GM10248 (cell line): ENCODE measurements at regions of chr12 and their contacts with region 1.

Region 1: DNA sequence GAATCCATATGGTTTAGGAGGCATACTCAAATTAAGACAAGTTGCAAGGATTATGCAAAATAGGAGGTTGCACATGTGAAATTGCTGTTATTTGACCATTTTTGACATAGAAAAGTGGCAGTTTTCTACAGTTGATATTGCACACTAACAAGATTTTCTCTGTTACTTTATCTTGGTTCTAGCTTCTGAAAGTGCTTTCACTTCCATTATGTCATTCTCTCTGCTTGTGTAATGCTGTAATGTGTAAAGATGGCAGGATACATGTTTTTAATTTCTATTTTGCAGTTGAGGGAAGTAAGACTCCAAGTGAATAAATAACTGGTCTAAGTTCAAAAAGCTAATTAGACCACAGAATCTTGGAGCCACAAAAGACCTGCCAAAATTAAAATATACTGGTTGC is 60.6 kb downstream of the MYRFL start:
- DNase-seq: peak; percentile 26
- CTCF ChIP-seq: no peak

Region 2: GRCh38 chr12:69873429-69873828 is 12.2 kb before region 1 on chr12:
- CTCF ChIA-PET with region 1: interaction called, 27 read pairs
- POLR2A ChIA-PET with region 1: no interaction called
- DNase-seq: no peak
- CTCF ChIP-seq: no peak

Region 3: DNA sequence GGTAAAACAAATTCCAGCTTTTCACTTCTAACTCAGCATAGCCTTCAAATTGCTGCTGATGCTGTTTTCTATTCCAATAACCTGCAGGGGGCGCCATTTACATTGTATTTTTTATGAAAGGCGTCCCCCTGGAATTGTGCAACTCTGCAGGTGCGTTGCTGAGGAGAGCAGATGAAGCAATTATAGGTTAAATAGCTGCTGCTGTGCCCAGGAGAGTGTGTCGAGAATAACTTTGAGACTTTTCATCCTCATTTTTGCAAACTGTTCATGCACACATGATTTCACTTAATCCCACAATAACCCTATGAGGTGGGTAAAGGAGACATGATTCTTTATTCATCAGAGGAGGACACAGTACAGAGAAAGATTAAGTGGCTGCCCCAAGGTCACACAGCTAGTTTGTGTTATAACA is 15.1 kb after region 1 on chr12:
- CTCF ChIA-PET with region 1: interaction called, 44 read pairs
- POLR2A ChIA-PET with region 1: no interaction called
- DNase-seq: peak; percentile 29
- CTCF ChIP-seq: peak; percentile 79

Region 4: GRCh38 chr12:70576346-70577282 is 691.0 kb after region 1 on chr12:
- CTCF ChIA-PET with region 1: interaction called, 41 read pairs
- POLR2A ChIA-PET with region 1: no interaction called
- DNase-seq: peak; percentile 34
- CTCF ChIP-seq: peak; percentile 72

Region 5: GRCh38 chr12:70733385-70733784 is 847.7 kb after region 1 on chr12:
- CTCF ChIA-PET with region 1: interaction called, 81 read pairs
- POLR2A ChIA-PET with region 1: no interaction called
- DNase-seq: peak; percentile 56
- CTCF ChIP-seq: peak; percentile 59